Sciatic nerve (tissue), 2 donors: ENCODE measurements at regions of chr10 and their contacts with region 1.

Region 1: GRCh38 chr10:15433850-15434537 is 62.9 kb upstream of the FAM171A1 start:
- DNase-seq: no peak
- ATAC-seq: peak; percentile 88

Region 2: DNA sequence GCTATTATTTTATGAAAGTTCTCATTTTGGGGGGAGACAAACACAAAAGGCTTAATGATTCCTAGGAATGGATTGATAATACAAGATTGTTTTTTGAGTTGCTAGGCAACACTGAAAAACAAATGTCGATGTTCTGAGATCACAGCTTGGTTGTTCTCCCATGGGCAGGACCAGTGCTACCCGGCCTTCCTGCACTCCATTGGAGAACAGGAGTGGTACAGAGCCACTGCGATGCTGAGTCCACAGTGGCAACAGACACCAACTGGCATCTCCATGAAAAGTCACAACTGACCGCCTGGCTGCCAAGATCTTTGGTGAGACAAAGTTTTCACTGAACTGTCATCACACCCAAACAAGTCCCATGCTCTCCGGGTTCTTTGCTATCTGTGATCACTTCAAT is 196.6 kb before region 1 on chr10:
- intact Hi-C with region 1: no loop called
- DNase-seq: no peak
- ATAC-seq: peak; percentile 95

Region 3: DNA sequence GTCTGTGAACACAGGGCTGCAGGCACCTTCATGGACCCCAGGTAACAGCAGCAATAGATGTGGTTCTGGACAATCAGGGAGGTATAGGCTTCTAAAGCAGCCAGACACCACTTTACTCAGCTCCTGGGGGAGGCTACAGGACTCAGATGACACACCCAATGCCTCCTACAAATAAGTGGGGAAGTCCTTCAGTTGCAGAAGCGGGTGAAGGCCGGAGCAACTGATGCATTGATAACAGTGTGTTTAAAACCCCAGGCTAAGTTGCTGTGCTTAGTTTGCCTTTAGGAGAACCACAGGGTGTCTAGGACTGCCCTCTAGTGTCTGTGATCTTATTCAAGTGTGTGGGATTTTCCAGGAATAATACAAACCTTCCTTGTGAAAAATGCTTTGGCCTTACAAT is 291.6 kb after region 1 on chr10:
- intact Hi-C with region 1: loop called (anchors 10 kb)
- DNase-seq: no peak
- ATAC-seq: peak; percentile 90

Region 4: GRCh38 chr10:15824498-15824897 is 390.5 kb after region 1 on chr10:
- intact Hi-C with region 1: loop called (anchors 10 kb)
- DNase-seq: no peak
- ATAC-seq: no peak